PC-3 (cell line): ENCODE measurements at regions of chrX and their contacts with region 1.

Region 1: GRCh38 chrX:134753718-134754008 is 95.4 kb upstream of the PLAC1 start:
- DNase-seq: peak; percentile 79
- ATAC-seq: peak; percentile 81
- H3K4me3 ChIP-seq: peak overlapping the region; percentile 50
- H3K27ac ChIP-seq: no peak overlapping the region
- H3K4me1 ChIP-seq: peaks cover 11% of the 10 kb centered on the region
- H3K27me3 ChIP-seq: no peaks in the 10 kb centered on the region
- CTCF ChIP-seq: peak; percentile 73

Region 2: GRCh38 chrX:134423615-134424014 is 330.0 kb before region 1 on chrX:
- CTCF ChIA-PET with region 1: no interaction called
- POLR2A ChIA-PET with region 1: no interaction called
- intact Hi-C with region 1: loop called (anchors 1 kb)
- DNase-seq: peak; percentile 49
- ATAC-seq: peak; percentile 29; the same call in 1 of the 2 replicates
- H3K4me3 ChIP-seq: no peak overlapping the region
- H3K27ac ChIP-seq: no peak overlapping the region
- H3K4me1 ChIP-seq: no peaks in the 10 kb centered on the region
- H3K27me3 ChIP-seq: no peaks in the 10 kb centered on the region
- CTCF ChIP-seq: peak; percentile 61

Region 3: GRCh38 chrX:134484039-134484438 is 269.6 kb before region 1 on chrX:
- CTCF ChIA-PET with region 1: interaction called, 6 read pairs
- POLR2A ChIA-PET with region 1: no interaction called
- intact Hi-C with region 1: loop called (anchors 2 kb)
- DNase-seq: peak; percentile 81
- ATAC-seq: no peak
- H3K4me3 ChIP-seq: no peak overlapping the region
- H3K27ac ChIP-seq: no peak overlapping the region
- H3K4me1 ChIP-seq: no peaks in the 10 kb centered on the region
- H3K27me3 ChIP-seq: no peaks in the 10 kb centered on the region
- CTCF ChIP-seq: peak; percentile 77

Region 4: GRCh38 chrX:134520860-134521390 is 232.7 kb before region 1 on chrX:
- CTCF ChIA-PET with region 1: interaction called, 11 read pairs
- POLR2A ChIA-PET with region 1: no interaction called
- intact Hi-C with region 1: loop called (anchors 1 kb)
- DNase-seq: peak; percentile 79
- ATAC-seq: peak; percentile 99
- H3K4me3 ChIP-seq: no peak overlapping the region
- H3K27ac ChIP-seq: no peak overlapping the region
- H3K4me1 ChIP-seq: no peaks in the 10 kb centered on the region
- H3K27me3 ChIP-seq: no peaks in the 10 kb centered on the region
- CTCF ChIP-seq: peak; percentile 80

Region 5: DNA sequence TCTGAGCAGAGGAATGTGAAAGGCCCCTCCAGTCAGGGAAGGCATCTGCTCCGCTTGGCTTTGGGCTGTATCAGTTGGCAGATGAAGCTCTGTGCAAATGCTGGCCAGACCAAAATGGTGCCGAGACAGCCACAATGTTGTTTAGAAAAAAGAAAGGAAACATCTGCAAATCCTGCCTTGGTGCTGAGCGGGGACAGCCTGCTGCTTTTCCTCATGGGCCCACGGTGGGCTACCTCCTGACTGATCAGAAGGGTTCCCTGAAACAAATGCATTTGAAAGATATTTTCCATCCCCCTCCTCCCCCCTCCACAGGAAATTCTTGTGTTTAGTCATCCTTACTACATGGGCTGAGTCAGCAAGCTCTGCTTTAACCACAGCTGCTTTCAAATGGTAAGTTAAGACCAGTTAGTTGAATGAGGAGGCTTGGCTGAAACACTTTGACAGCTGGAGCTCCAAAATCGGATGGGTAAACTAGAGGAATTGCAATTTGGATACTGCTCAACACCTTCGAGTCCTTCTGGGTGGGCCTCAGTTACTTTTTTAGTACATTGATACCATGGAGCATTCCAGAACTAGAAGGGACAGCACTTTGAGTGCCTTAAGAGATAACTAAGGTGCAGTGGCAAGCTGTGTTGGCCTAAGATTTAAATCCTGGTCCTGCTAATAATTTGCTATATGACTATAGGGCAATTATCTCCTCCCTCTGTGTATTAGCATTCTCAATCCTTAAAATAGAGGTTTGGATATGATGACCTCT is 131.4 kb before region 1 on chrX:
- CTCF ChIA-PET with region 1: no interaction called
- POLR2A ChIA-PET with region 1: no interaction called
- intact Hi-C with region 1: loop called (anchors 5 kb)
- DNase-seq: peak; percentile 86
- ATAC-seq: peak; percentile 90
- H3K4me3 ChIP-seq: peak overlapping the region; percentile 11; the same call in 1 of the 2 replicates
- H3K27ac ChIP-seq: peak overlapping the region; percentile 57
- H3K4me1 ChIP-seq: peaks cover 56% of the 10 kb centered on the region
- H3K27me3 ChIP-seq: no peaks in the 10 kb centered on the region
- CTCF ChIP-seq: no peak

Region 6: DNA sequence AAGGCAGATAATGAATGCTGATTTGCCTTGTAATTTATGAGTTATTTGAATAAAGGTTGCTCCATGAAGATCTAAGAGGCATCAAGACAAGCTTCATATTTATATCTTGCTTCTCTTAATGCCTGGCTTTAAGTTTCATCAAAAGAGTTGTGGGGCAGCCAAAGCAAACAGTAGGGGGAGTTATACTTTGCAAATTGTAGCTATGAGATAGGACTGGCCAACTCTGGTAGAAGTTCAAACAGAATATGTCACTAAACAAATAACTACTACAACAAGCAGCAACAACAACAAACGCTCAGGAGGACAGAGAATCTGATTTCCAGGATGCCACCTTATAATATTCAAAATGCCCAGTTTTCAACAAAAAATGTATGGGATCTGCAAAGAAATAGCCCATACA is 26.3 kb before region 1 on chrX:
- CTCF ChIA-PET with region 1: interaction called, 4 read pairs
- POLR2A ChIA-PET with region 1: no interaction called
- intact Hi-C with region 1: loop called (anchors 1 kb)
- DNase-seq: peak; percentile 73
- ATAC-seq: peak; percentile 76
- H3K4me3 ChIP-seq: no peak overlapping the region
- H3K27ac ChIP-seq: peak overlapping the region; percentile 30
- H3K4me1 ChIP-seq: peaks cover 39% of the 10 kb centered on the region
- H3K27me3 ChIP-seq: no peaks in the 10 kb centered on the region
- CTCF ChIP-seq: peak; percentile 63

Region 7: DNA sequence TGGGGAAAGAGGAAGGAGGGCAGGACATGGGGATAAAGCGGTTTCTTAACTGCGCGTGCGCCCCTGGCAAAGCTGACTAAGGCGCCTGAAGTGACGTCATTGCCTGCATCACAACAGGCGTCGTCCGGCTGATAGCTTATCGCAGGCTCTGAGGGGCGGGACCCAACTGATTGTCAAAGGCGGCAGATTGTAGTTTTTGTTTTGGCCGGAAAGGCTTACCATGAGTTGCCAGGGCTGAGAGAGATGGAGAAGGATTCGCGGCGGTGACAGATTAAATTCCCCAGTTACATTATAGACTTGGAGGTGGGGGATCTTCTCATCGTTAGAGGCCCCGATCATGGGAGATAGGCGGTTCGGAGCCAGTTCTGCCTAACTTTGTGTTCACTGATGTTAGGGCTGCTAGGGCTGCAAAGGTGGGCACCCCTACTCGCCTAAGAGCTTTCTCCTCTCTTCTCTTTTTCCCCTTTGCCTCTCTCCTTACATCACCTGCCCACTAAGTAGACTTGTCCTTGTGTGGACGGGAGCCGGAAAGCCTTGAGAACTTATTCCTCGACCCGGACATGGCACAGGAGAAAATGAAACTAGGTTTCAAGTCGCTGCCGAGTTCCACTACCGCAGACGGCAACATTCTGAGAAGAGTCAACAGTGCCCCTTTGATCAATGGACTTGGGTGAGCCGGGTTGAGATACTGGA is 53.5 kb after region 1 on chrX:
- CTCF ChIA-PET with region 1: no interaction called
- POLR2A ChIA-PET with region 1: no interaction called
- intact Hi-C with region 1: no loop called
- DNase-seq: peak; percentile 83
- ATAC-seq: peak; percentile 91
- H3K4me3 ChIP-seq: peak overlapping the region; percentile 81
- H3K27ac ChIP-seq: peak overlapping the region; percentile 28
- H3K4me1 ChIP-seq: no peaks in the 10 kb centered on the region
- H3K27me3 ChIP-seq: no peaks in the 10 kb centered on the region
- CTCF ChIP-seq: no peak